ENCODE measurements at regions of chrX and their contacts with region 1.

Region 1: GRCh38 chrX:11137543-11138139 is 26.5 kb downstream of the HCCS start:
- DNase-seq: peak; percentile 45
- H3K4me3 ChIP-seq: no peak overlapping the region
- H3K27ac ChIP-seq: no peak overlapping the region
- H3K4me1 ChIP-seq: no peaks in the 10 kb centered on the region
- H3K27me3 ChIP-seq: no peaks in the 10 kb centered on the region
- CTCF ChIP-seq: peak in 1 of 2 donors; percentile 16
- POLR2A ChIP-seq: no peak

Region 2: GRCh38 chrX:11111038-11111851 is 26.4 kb before region 1 on chrX and contains the start of gene HCCS:
- CTCF ChIA-PET with region 1: no interaction called
- POLR2A ChIA-PET with region 1: no interaction called
- dilution Hi-C with region 1: no loop called
- intact Hi-C with region 1: loop called (anchors 2 kb)
- DNase-seq: peak; percentile 86
- H3K4me3 ChIP-seq: peak within 1 kb of the TSS; percentile 32 to 97 (median 78)
- H3K27ac ChIP-seq: peak within 1 kb of the TSS; percentile 76
- H3K4me1 ChIP-seq: peaks cover 27% of the 10 kb centered on the region
- H3K27me3 ChIP-seq: no peaks in the 10 kb centered on the region
- CTCF ChIP-seq: no peak
- POLR2A ChIP-seq: no peak
- total RNA-seq, gene HCCS: 35.2 and 39.3 TPM in 2 replicates